Heart left ventricle (tissue), 16 donors: ENCODE measurements at regions of chr5 and their contacts with region 1.

Region 1: GRCh38 chr5:59390074-59390659 is 503.4 kb downstream of the PDE4D start:
- DNase-seq: peak in 1 of 5 donors; percentile 8
- ATAC-seq: no peak
- H3K4me3 ChIP-seq: no peak overlapping the region
- H3K27ac ChIP-seq: no peak overlapping the region
- H3K4me1 ChIP-seq: no peaks in the 10 kb centered on the region
- H3K27me3 ChIP-seq: no peaks in the 10 kb centered on the region
- CTCF ChIP-seq: peak; percentile 58 to 88 (median 74)
- POLR2A ChIP-seq: no peak

Region 2: DNA sequence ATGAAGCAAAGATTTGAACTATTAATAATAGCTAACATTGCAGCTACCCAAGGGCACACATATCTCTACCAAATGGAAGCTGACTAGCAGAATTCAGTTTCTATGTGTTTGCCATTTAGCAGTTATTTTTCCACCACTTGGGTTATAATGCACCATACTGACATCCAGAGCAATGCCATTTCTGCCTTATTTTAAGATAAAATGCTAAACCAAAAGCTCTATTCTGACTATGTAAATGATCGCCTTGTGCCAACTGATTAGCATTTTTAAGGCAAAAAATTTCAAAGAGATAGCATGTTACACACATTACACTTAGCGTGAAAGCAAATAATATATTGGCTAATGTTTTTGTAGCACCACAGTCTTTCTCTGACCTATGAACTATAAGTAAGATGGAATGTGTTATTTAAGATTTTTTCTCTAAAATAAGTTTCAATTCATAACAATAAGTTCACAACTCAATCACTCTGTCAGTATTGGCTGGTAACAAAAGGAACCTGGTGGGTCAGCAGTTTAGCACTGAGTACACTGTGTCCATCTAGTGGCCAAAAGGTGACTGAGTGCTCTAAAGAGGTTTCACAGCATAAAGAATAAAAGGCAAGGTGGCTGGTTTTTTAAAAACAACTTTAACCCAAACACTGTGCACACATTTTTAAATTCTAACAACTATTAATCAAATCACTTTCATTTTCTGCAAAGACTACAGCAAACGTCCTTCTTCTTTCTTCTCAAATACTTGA is 59.9 kb after region 1 on chr5:
- intact Hi-C with region 1: no loop called
- DNase-seq: no peak
- ATAC-seq: no peak
- H3K4me3 ChIP-seq: no peak overlapping the region
- H3K27ac ChIP-seq: no peak overlapping the region
- H3K4me1 ChIP-seq: no peaks in the 10 kb centered on the region
- H3K27me3 ChIP-seq: no peaks in the 10 kb centered on the region
- CTCF ChIP-seq: peak in 2 of 12 donors; percentile 7 to 8
- POLR2A ChIP-seq: no peak

Region 3: DNA sequence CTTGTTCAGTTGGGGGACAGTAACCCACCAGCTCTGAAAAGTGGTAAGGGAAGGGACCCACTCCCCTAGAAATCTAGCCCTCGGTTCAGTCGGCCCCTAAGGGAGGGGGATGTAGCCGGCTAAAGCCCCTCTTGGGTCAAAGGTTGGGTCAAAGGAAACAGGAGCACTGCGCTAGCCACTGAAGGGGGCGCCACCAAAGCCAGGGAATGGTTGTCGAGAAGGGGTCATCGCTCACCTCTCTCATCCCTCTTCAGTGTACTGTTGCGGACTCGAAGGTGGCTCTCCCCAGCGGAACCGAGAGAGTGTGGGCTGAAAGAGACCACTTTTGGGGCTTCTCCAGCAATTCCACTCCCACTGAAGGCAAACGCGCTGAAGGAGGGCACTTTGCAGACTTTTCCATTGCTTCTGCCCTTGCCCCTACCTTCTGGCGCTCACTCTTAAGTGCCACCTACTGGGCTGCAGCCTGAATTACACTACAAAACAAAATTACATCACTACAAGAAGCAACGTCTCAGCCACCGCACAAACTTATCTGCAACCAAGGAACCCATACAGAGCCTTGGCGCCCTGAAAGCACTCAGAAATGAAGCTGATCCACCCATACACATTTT is 106.5 kb after region 1 on chr5:
- intact Hi-C with region 1: loop called in 2 of 10 experiments (anchors 2 to 10 kb)
- DNase-seq: no peak
- ATAC-seq: no peak
- H3K4me3 ChIP-seq: no peak overlapping the region
- H3K27ac ChIP-seq: no peak overlapping the region
- H3K4me1 ChIP-seq: no peaks in the 10 kb centered on the region
- H3K27me3 ChIP-seq: no peaks in the 10 kb centered on the region
- CTCF ChIP-seq: peak in 5 of 12 donors; percentile 16 to 26 (median 23)
- POLR2A ChIP-seq: no peak

Region 4: GRCh38 chr5:59506285-59506877 is 116.2 kb after region 1 on chr5:
- intact Hi-C with region 1: loop called in 2 of 10 experiments (anchors 5 to 10 kb)
- DNase-seq: no peak
- ATAC-seq: no peak
- H3K4me3 ChIP-seq: no peak overlapping the region
- H3K27ac ChIP-seq: no peak overlapping the region
- H3K4me1 ChIP-seq: no peaks in the 10 kb centered on the region
- H3K27me3 ChIP-seq: no peaks in the 10 kb centered on the region
- CTCF ChIP-seq: peak; percentile 40 to 74 (median 48)
- POLR2A ChIP-seq: no peak